H1 (cell line): ENCODE measurements at regions of chr12 and their contacts with region 1.

Region 1: DNA sequence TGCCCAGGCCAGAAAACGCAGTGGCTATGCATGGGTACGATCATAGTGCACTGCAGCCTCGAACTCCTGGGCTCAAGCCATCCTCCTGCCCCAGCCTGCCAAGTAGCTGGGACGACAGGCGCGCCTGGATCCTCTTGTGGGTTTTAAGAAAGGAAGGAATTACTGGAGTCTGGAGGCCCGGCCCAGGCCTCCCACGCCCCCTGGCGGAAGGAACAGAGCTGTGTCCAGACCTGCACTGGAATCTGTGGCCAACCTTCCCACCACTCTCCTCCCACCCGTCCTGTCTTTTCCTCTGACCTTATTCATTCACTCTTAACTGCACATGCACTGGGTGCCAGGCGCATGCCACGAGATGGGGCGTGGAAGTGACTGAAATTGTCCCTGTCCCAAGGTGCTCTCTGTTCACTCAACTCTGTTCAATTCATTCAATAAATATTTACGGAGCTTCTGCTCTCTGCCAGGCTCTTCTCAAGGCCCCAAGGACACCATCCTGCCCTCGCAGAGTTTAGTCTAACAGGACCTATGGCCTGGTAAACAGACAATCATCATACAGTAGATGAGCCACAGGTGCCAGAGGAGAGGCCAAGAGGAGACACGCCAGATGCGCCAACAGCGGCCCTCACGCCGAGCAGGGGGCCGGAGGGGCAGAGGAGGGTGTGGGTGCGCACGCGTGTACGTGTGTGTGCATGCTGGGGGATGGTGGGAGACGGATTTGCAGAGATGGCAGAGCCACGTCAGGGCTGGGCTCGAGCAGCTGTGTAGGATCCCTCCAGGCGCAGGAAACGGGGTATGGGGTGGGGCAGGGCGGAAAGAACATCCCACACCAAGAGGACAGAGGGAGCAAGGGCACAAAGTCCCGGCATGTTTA is 13.7 kb upstream of the TMEM106C start:
- DNase-seq: peak; percentile 61 to 87
- H3K4me3 ChIP-seq: no peak overlapping the region
- H3K27ac ChIP-seq: no peak overlapping the region
- H3K4me1 ChIP-seq: no peaks in the 10 kb centered on the region; a peak in 2 of 7 replicates
- H3K27me3 ChIP-seq: no peaks in the 10 kb centered on the region; a peak in 1 of 7 replicates
- CTCF ChIP-seq: peak in 2 of 3 experiments; percentile 92 to 93; a peak in 3 of 4 replicates
- EP300 ChIP-seq: no peak
- POLR2A ChIP-seq: no peak
- RAD21 ChIP-seq: peak; percentile 78 to 85

Region 2: GRCh38 chr12:47870175-47870781 is 79.4 kb before region 1 on chr12:
- CTCF ChIA-PET with region 1: interaction called, 28 read pairs
- POLR2A ChIA-PET with region 1: no interaction called
- DNase-seq: peak; percentile 17 to 56
- H3K4me3 ChIP-seq: no peak overlapping the region
- H3K27ac ChIP-seq: no peak overlapping the region
- H3K4me1 ChIP-seq: no peaks in the 10 kb centered on the region
- H3K27me3 ChIP-seq: no peaks in the 10 kb centered on the region
- CTCF ChIP-seq: peak; percentile 74 to 80 (median 78)
- EP300 ChIP-seq: no peak
- POLR2A ChIP-seq: no peak
- RAD21 ChIP-seq: peak; percentile 55 to 68; a peak in 3 of 4 replicates

Region 3: GRCh38 chr12:47904713-47905310 is 44.9 kb before region 1 on chr12 and contains the start of gene VDR:
- CTCF ChIA-PET with region 1: interaction called, 31 read pairs
- POLR2A ChIA-PET with region 1: interaction called, 8 read pairs
- DNase-seq: peak; percentile 54 to 87
- H3K4me3 ChIP-seq: peak within 1 kb of the TSS; percentile 58 to 71 (median 68)
- H3K27ac ChIP-seq: peak within 1 kb of the TSS; percentile 94
- H3K4me1 ChIP-seq: peaks cover 0 to 9% (median 5%) of the 10 kb centered on the region in 4 experiments; a peak in 4 of 7 replicates
- H3K27me3 ChIP-seq: peaks cover 8 to 61% (median 42%) of the 10 kb centered on the region in 4 experiments
- CTCF ChIP-seq: peak; percentile 13 to 56 (median 42); a peak in 3 of 4 replicates
- EP300 ChIP-seq: peak in 1 of 2 experiments; percentile 96; a peak in 1 of 3 replicates
- POLR2A ChIP-seq: peak; percentile 69 to 71; a peak in 2 of 3 replicates
- RAD21 ChIP-seq: no peak; a peak in 1 of 4 replicates
- total RNA-seq, gene VDR: 0.34 and 0.65 TPM in 2 replicates

Region 4: DNA sequence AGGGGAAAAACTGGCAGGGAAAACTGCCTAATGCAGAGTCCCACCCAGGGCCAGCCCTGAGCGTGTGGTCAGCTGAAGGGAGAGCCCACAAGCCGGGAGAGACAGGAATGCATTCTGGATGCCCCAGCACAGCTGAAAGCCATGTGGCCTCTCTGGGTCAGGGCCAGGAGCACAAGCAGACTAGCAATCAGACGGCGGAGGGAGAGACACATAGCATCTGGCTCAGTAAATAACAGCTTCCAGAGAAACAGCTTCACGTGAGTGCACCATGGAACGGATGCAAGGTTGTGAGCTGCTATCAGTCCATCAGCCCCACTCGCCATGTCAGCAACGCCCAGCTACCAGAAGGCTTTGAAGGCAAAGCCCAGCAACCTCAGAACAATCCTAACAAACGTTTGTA is 14.5 kb before region 1 on chr12:
- CTCF ChIA-PET with region 1: interaction called, 38 read pairs
- POLR2A ChIA-PET with region 1: no interaction called
- DNase-seq: no peak
- H3K4me3 ChIP-seq: no peak overlapping the region
- H3K27ac ChIP-seq: no peak overlapping the region
- H3K4me1 ChIP-seq: no peaks in the 10 kb centered on the region
- H3K27me3 ChIP-seq: peaks cover 0 to 6% (median 0%) of the 10 kb centered on the region in 4 experiments; a peak in 1 of 7 replicates
- CTCF ChIP-seq: no peak
- EP300 ChIP-seq: no peak
- POLR2A ChIP-seq: no peak
- RAD21 ChIP-seq: no peak

Region 5: DNA sequence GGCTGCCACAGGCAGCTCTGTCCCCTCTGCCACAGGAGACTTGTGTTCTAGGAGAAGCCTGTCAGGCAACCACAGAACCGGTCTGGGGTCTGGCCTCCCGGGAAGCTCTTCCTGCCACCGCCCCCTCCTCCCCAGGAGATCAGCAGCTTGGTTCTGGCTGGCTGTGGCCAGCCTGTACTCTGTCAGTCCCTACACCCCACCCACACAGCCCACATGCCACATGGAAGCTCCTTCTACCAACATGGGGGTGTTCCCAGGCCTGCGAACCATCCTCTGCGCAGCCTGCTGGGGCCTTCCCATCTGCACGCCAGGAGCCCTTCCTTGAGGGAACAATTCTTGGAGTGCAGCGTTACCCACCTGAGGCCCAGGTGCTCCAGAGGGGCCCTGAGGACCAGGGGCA is 30.5 kb after region 1 on chr12:
- CTCF ChIA-PET with region 1: interaction called, 22 read pairs
- POLR2A ChIA-PET with region 1: no interaction called
- DNase-seq: no peak
- H3K4me3 ChIP-seq: no peak overlapping the region
- H3K27ac ChIP-seq: no peak overlapping the region
- H3K4me1 ChIP-seq: no peaks in the 10 kb centered on the region
- H3K27me3 ChIP-seq: no peaks in the 10 kb centered on the region
- CTCF ChIP-seq: no peak
- EP300 ChIP-seq: peak in 1 of 2 experiments; percentile 37; a peak in 1 of 3 replicates
- POLR2A ChIP-seq: no peak
- RAD21 ChIP-seq: no peak